ENCODE measurements at regions of chr14 and their contacts with region 1.

Region 1: DNA sequence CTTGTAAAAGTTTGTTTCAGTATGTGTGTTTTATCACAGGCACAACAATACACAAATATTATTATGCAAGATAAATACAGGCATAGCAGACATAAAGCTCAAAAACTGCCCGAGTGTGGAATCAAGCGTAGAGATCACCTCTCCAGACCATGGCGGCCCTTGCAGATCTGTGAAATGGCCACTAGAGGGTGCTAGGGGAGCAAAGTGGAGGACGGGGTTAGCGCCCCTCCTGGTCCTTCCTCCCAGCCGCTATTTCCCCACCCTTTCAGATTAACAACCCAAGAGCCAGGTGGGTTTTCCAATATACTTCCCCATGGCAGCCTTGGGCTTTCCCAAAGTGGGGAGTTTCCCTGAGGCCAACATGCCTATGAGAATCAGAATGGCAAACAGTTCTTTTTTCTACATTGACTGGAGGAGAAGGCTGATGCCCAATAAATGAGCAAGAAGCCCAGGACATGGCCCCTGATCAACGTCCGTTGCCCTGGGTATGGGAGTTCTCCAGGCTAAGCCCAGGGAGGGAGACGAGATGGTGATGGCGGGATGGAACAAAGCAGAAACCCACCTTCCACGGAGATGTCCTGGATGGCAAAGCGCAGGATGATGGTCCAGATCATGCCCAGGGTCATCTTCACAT is 67.4 kb downstream of the ACTN1 start:
- DNase-seq: no peak
- H3K4me3 ChIP-seq: no peak overlapping the region
- H3K27me3 ChIP-seq: no peaks in the 10 kb centered on the region
- CTCF ChIP-seq: peak; percentile 99

Region 2: GRCh38 chr14:68939893-68940613 is 28.3 kb after region 1 on chr14:
- CTCF ChIA-PET with region 1: interaction called, 35 read pairs
- POLR2A ChIA-PET with region 1: no interaction called
- DNase-seq: peak; percentile 92
- H3K4me3 ChIP-seq: no peak overlapping the region
- H3K27me3 ChIP-seq: no peaks in the 10 kb centered on the region
- CTCF ChIP-seq: no peak

Region 3: DNA sequence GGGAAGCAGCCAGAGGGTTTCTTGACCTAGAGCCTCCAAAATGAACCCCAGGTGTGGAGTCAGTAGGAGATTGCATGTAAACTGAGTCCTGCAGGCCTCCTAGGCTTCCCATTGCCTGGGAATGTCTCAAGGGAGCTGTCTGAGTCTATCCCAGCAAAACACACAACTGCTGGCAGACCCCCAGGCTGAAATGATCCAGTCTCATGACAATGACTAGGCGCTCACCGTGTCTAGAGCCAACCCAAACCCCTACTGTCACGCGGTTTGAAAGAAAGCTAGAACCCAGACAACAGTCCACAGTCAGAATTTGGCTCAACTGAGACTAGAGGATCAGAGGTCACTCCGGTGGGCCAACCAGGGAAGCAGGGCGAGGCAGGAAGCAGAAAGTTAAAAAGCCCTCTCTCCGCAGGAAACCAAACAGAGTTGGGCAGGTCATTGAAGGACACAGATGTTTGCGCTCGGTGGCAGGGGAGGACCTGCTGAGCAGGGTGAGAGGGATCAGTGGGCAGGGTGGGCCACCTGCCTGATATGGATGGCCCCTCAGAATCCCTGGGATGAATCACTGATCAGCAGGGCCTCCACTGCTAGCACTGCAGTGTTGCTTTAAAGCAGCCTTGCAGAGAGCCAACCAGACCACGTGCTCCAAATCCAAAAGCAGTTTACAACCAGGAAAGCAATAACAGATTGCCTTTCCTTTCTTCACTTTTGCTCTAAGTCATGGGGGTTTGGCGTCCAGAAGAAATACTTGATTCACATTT is 43.6 kb after region 1 on chr14:
- CTCF ChIA-PET with region 1: interaction called, 12 read pairs
- POLR2A ChIA-PET with region 1: no interaction called
- DNase-seq: no peak
- H3K4me3 ChIP-seq: no peak overlapping the region
- H3K27me3 ChIP-seq: no peaks in the 10 kb centered on the region
- CTCF ChIP-seq: no peak

Region 4: DNA sequence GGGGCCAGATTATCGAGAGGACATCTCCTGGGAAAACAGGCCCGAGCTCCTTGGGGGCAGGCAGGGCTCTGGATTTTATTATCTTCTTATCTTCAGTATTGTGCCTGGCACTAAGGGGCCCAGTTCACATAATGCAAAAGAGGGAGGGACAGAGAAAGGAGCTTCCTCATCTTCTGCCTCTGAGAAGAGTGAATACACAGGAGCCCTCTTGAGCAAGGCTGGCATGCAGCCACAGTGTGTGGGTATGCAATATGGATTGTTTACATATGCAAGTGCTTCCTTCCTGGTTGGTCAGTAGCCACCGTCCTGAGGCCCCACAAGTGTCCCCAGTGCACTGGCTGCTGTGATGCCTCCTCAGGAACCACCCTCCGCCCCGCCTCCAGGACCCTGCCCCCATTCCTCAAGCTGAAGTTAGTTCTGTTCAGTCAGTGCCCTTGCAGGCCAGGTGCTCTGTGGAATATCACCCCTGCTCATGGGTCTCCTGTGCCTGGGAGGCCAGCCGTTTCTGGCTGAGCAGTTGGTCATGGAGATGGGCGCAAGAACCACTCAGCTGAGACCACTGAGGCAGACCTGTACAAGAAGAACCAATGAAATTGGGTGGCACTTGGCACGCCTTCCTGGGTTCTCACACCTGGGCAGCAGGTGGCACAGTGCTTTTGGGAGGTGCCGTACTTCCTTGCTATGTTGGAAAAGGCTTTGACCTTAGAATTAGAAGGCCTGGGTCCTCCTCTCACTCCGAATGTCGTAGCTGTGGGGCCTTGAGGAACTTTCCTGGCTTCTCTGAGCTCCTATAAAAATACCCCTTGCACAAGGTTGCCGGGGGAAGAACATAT is 102.4 kb after region 1 on chr14:
- CTCF ChIA-PET with region 1: no interaction called
- POLR2A ChIA-PET with region 1: no interaction called
- DNase-seq: no peak
- H3K4me3 ChIP-seq: no peak overlapping the region
- H3K27me3 ChIP-seq: no peaks in the 10 kb centered on the region
- CTCF ChIP-seq: no peak

Region 5: DNA sequence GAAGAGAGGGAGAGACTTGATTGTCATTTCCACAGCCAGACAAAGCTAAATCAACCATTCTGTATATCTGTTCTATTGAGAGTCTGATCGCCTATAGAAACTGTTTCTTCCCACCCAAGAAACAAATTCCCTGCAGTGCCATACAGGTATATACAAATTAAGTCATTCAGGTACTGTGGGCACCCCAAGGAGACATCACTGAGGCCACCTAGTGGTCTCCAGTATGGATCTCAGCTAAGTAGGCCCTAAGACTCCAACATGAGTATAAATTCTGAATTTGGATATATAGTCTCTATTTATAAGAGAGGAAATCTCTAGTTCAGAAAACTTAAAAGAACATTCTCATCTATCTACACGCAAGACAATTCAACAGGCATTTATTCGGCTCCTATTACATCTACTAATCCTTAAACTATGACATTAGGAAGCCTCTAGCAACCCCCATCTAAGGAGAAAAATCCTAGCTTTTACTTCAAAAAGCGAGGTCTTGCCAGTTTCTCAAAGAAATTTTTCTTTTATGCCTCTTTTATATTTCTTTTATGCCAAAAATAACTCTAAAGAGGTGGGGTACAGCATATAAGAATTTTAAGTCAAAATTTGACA is 178.6 kb after region 1 on chr14:
- CTCF ChIA-PET with region 1: interaction called, 12 read pairs
- POLR2A ChIA-PET with region 1: no interaction called
- DNase-seq: no peak
- H3K4me3 ChIP-seq: no peak overlapping the region
- H3K27me3 ChIP-seq: no peaks in the 10 kb centered on the region
- CTCF ChIP-seq: peak; percentile 77

Region 6: GRCh38 chr14:69101331-69101826 is 189.7 kb after region 1 on chr14:
- CTCF ChIA-PET with region 1: interaction called, 19 read pairs
- POLR2A ChIA-PET with region 1: no interaction called
- DNase-seq: peak; percentile 60
- H3K4me3 ChIP-seq: no peak overlapping the region
- H3K27me3 ChIP-seq: no peaks in the 10 kb centered on the region
- CTCF ChIP-seq: peak; percentile 75

Region 7: DNA sequence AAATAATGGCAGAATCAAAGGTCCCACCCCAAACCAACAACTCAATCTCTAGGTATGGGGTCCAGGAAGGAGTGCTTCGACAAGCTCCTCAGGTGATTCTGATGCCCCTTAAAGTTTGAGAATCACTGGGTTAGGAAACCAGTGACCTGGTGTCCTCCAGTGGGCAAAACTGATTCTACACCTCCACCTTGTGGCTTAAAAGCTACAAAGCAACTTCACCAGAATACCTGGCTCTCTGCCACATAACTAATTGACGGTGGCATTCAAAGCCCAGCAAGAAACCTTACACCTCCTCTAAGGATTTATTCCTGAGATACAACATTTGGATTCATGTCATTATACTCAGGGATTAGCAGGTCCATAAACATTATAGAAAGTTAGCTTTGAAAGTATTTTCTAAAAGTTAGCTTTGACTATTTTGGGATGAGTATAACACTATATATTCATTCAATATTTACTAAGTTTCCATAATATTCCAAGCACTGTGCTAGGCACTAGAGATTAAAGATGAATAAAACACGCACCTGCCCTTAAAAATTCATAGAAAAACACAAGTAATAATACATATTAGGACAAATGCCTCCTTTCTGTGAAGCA is 195.8 kb after region 1 on chr14:
- CTCF ChIA-PET with region 1: interaction called, 34 read pairs
- POLR2A ChIA-PET with region 1: no interaction called
- DNase-seq: no peak
- H3K4me3 ChIP-seq: no peak overlapping the region
- H3K27me3 ChIP-seq: no peaks in the 10 kb centered on the region
- CTCF ChIP-seq: peak; percentile 65

Measured in BJ (cell line).